A673 (cell line): ENCODE measurements at regions of chr19 and their contacts with region 1.

Region 1: DNA sequence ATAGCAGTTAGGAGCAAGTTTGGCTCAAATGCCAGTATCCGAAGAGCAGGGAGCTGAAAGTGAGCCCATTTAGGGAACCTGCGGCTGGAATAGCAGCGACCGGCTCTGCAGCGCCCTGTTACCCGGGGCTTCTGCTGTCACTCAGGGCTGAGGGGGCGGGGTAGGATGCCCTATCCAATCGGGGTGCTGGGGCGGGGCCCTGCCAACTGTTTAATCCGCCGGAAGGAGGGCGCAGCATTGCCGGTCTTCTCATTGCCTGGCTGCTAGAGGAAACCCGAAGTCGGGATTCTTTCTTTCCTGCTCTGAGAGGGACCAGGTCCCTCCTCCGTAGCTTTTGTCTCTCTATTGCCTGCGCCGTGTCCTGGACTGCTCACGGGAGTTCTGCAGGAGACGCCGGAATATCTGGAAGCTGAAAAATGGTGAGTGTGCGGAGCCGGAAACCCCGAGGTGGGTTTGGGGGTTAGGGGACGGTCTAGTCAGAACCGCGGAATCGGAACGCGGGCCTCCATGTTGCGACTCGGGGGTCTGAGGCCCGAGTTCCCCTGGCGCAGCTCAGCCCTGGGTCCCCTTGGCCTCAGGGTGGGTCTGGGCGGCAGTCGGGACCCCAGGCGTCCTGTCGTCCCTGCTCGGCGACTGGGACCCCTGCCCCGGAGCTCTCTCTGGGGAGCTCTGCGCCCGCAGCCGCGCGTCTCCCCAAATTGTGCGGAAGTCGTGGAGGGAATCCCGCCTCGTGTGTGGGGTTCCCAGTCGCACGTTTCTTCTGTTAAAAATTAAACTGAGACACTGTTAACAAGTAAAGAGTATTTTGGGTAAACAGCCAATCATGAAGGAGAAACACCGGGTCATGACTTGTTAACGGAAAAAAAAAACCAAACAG is 22.8 kb downstream of the ZNF763 start:
- DNase-seq: peak; percentile 98
- H3K4me3 ChIP-seq: peak overlapping the region; percentile 65
- H3K27ac ChIP-seq: peak overlapping the region; percentile 77
- H3K4me1 ChIP-seq: no peaks in the 10 kb centered on the region
- H3K27me3 ChIP-seq: no peaks in the 10 kb centered on the region
- CTCF ChIP-seq: no peak

Region 2: GRCh38 chr19:11881151-11881800 is 106.4 kb before region 1 on chr19:
- CTCF ChIA-PET with region 1: interaction called, 3 read pairs
- POLR2A ChIA-PET with region 1: no interaction called
- intact Hi-C with region 1: loop called (anchors 2 kb)
- DNase-seq: peak; percentile 76
- H3K4me3 ChIP-seq: no peak overlapping the region
- H3K27ac ChIP-seq: no peak overlapping the region
- H3K4me1 ChIP-seq: no peaks in the 10 kb centered on the region
- H3K27me3 ChIP-seq: peaks cover 4% of the 10 kb centered on the region
- CTCF ChIP-seq: peak; percentile 79

Region 3: DNA sequence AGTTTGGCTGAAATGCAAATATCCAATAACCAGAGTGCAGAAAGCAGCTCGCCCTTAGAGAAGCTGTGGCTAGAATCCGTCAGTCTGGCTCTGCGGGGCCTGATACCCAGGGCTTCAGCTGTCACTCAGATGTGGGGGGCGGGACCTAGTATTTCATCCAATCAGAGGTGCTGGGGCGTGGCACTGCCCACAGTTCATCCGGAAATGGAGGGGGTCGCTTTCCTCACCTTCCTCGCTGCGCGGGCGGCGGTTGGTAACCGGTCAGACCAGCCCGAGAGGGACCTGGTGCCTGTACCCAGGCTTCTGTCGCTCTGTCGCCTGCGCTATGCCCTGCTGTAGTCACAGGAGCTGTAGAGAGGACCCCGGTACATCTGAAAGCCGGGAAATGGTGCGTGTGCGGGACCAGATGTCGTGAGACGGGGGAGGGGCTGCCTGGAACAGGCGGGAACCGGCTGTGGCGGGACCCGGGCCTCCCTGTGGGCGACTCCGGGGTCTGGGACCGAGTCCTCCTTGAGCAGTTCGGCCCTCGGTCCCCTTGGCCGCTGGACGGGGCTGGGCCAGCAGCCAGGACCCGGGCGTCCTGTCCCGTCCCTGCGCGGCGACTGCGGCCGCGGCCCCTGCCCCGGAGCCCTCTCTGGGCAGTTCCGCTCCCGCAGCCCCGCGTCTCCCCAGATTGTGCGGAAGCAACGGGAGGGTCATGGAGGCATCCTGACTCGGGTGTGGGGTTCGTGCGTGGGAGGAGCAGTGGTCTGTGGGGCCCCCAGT is 62.6 kb before region 1 on chr19 and contains the start of gene ZNF700:
- CTCF ChIA-PET with region 1: interaction called, 16 read pairs
- POLR2A ChIA-PET with region 1: no interaction called
- intact Hi-C with region 1: loop called (anchors 2 kb)
- DNase-seq: peak; percentile 96
- H3K4me3 ChIP-seq: peak within 1 kb of the TSS; percentile 82
- H3K27ac ChIP-seq: peak within 1 kb of the TSS; percentile 90
- H3K4me1 ChIP-seq: no peaks in the 10 kb centered on the region
- H3K27me3 ChIP-seq: no peaks in the 10 kb centered on the region
- CTCF ChIP-seq: no peak
- total RNA-seq, gene ZNF700: 10.9 and 11.0 TPM in 2 replicates

Region 4: DNA sequence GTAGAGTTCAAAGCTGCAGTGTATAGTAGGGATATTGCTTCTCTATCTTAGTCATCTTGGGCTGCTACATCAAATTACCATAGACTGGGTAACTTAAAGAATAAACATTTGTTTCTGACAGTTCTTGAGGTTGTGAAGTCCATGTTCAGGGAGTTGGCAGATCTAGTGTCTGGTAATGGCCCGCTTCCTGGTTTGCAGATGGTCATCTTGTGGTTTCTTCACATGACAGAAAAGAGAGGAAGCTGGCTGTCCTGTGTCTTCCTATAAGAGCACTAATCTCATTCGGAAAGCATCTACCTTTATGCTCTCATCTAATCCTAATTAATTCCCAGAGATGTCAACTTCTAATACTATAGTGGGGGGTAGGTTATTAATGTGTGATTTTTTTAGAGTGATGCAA is 16.6 kb before region 1 on chr19:
- CTCF ChIA-PET with region 1: no interaction called
- POLR2A ChIA-PET with region 1: no interaction called
- intact Hi-C with region 1: no loop called
- DNase-seq: no peak
- H3K4me3 ChIP-seq: no peak overlapping the region
- H3K27ac ChIP-seq: no peak overlapping the region
- H3K4me1 ChIP-seq: no peaks in the 10 kb centered on the region
- H3K27me3 ChIP-seq: no peaks in the 10 kb centered on the region
- CTCF ChIP-seq: no peak